Esophagus muscularis mucosa (tissue), 4 donors: ENCODE measurements at regions of chr19 and their contacts with region 1.

Region 1: DNA sequence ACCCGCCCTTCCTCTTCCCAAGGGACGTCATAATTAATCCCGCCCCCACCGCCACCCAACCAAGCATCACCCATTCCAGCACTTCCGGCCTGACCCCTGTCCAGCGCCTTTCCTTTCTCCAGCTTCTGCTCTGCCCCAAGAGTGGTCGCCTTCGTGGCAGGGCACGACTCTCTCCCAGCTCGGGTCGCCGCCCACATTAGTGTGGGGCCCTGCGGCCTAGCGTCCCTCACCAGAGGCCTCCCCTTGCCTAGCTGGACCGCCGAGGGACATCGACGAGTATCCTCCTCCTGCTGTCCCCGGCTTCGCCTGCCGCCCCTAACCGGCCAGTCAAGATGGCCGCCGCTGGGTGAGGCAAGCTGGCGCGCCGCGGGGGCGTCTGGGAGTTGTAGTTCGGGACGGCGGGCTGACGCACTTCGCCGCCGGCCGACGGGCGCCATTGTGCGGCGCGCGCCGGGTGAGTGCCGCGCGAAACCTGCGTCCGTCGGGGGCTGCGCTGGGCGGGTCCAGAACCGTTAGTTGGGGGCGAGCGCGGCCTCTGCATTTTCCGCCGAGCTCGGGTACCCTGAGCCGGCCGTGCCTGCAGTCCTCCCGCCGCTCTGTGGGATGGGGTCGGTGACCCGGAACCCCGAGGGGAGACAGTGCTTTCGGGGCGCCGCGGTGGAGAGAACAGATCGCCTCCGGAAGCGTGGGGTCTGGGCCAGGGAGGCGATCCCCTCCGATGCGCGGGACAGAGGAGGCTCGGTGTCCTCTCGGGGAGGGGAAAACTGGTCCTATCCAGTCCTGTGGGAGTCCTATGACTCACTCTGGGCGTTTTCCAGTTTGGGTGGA is at the start of gene ZNF274:
- DNase-seq: peak; percentile 96
- H3K4me3 ChIP-seq: peak within 1 kb of the TSS; percentile 78 to 98 (median 87)
- H3K27ac ChIP-seq: peak within 1 kb of the TSS; percentile 96
- H3K4me1 ChIP-seq: peaks cover 0 to 28% (median 0%) of the 10 kb centered on the region in 4 donors
- H3K27me3 ChIP-seq: no peaks in the 10 kb centered on the region
- CTCF ChIP-seq: no peak
- EP300 ChIP-seq: no peak
- POLR2A ChIP-seq: peak; percentile 81
- total RNA-seq, gene ZNF274: 18.7 to 27.8 (median 22.8) TPM

Region 2: DNA sequence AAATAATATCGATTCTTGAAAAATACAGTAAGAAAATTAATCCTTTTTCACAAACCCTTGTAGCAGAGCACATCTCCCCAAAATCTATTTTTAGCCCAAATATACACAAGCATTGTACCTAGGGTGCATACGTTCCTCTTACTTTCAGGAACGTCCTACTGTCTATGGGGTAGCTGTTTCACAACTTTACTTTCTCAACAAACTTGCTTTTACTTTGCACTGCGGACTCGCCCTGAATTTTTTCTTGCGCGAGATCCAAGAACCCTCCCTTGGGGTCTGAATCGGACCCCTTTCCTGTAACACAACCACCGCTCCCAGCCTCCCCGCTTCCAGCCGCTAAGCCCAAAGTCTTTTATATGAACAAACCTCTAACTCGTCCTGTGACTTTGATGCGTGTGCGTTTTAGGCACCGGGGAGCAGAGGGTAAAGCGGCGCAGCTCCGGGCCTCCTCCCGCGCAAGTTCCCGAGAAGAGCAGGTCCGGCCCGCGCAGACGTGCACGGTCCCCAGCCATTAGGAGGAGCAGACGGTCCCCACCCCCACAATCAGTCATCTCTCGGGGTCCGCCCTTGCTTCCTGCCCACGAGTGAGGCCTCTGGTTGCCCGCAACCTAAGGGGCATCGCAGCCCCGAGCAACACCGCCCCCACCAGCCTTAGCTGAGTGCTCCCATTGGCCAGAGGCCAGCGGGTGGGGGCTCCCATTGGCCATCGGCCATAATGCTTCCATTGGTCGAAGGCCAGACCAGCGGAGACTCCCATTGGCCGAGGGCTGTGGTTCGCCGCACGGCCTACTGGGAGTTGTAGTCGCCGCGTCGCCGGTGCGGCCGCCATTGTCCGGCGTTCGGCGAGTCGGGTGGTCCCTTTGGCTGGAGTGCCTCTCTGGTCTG is 95.2 kb after region 1 on chr19 and contains the start of gene ZNF8:
- intact Hi-C with region 1: loop called (anchors 10 kb)
- DNase-seq: peak; percentile 99
- H3K4me3 ChIP-seq: peak within 1 kb of the TSS; percentile 78 to 90 (median 84)
- H3K27ac ChIP-seq: peak within 1 kb of the TSS; percentile 86 to 94 (median 90)
- H3K4me1 ChIP-seq: peaks cover 15 to 35% (median 28%) of the 10 kb centered on the region in 4 donors
- H3K27me3 ChIP-seq: no peaks in the 10 kb centered on the region
- CTCF ChIP-seq: peak in 1 of 3 experiments; percentile 35
- EP300 ChIP-seq: no peak
- POLR2A ChIP-seq: no peak
- total RNA-seq, gene ZNF8: 8.1 to 12.3 (median 10.3) TPM